ENCODE measurements at regions of chr12 and their contacts with region 1.

Region 1: DNA sequence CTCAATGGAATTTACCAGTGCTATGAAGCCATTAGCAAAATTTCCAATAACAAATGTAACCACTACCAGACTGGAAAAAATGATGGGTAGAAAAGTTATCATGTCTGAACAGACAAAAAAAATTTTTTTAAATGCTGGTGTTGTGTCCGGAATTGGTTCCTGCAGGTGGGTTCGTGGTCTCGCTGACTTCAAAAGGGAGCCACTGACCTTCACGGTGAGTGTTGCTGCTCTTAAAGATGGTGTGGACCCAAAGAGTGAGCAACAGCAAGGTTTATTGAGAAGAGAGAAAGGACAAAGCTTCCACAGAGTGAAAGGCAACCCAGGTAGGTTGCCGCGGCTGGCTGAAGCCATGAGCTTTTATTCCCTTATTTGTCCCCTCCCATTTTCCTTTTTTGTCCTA is at the start of gene TAS2R43:
- DNase-seq: no peak
- ATAC-seq: no peak
- H3K4me3 Mint-ChIP-seq: no peak within 1 kb of the TSS
- H3K27ac Mint-ChIP-seq: no peak within 1 kb of the TSS
- H3K4me1 Mint-ChIP-seq: no peaks in the 10 kb centered on the region
- H3K27me3 Mint-ChIP-seq: no peaks in the 10 kb centered on the region
- CTCF ChIP-seq: no peak
- total RNA-seq, gene TAS2R43: 0.31 to 0.34 TPM

Region 2: GRCh38 chr12:10511756-10512355 is 580.3 kb before region 1 on chr12:
- CTCF ChIA-PET with region 1: no interaction called
- POLR2A ChIA-PET with region 1: no interaction called
- intact Hi-C with region 1: no loop called
- DNase-seq: no peak
- ATAC-seq: no peak
- H3K4me3 Mint-ChIP-seq: no peak overlapping the region
- H3K27ac Mint-ChIP-seq: no peak overlapping the region
- H3K4me1 Mint-ChIP-seq: no peaks in the 10 kb centered on the region
- H3K27me3 Mint-ChIP-seq: no peaks in the 10 kb centered on the region
- CTCF ChIP-seq: no peak

Region 3: GRCh38 chr12:11039171-11039570 is 53.0 kb before region 1 on chr12:
- CTCF ChIA-PET with region 1: no interaction called
- POLR2A ChIA-PET with region 1: no interaction called
- intact Hi-C with region 1: loop called (anchors 5 kb)
- DNase-seq: no peak
- ATAC-seq: no peak
- H3K4me3 Mint-ChIP-seq: no peak overlapping the region
- H3K27ac Mint-ChIP-seq: no peak overlapping the region
- H3K4me1 Mint-ChIP-seq: peaks cover 5% of the 10 kb centered on the region
- H3K27me3 Mint-ChIP-seq: no peaks in the 10 kb centered on the region
- CTCF ChIP-seq: no peak

Region 4: GRCh38 chr12:11158885-11159444 is 66.8 kb after region 1 on chr12:
- CTCF ChIA-PET with region 1: no interaction called
- POLR2A ChIA-PET with region 1: no interaction called
- intact Hi-C with region 1: no loop called
- DNase-seq: no peak
- ATAC-seq: no peak
- H3K4me3 Mint-ChIP-seq: no peak overlapping the region
- H3K27ac Mint-ChIP-seq: no peak overlapping the region
- H3K4me1 Mint-ChIP-seq: peaks cover 41% of the 10 kb centered on the region
- H3K27me3 Mint-ChIP-seq: no peaks in the 10 kb centered on the region
- CTCF ChIP-seq: no peak